Activated CD4-positive, alpha-beta T cell treated with anti-CD3 and anti-CD28 coated beads for 36 hours (primary cell): ENCODE measurements at regions of chrX and their contacts with region 1.

Region 1: GRCh38 chrX:149962859-149963757 is 24.8 kb upstream of the EOLA2 start:
- DNase-seq: peak; percentile 44
- ATAC-seq: peak; percentile 63
- H3K4me3 Mint-ChIP-seq: no peak overlapping the region
- H3K27ac Mint-ChIP-seq: no peak overlapping the region
- H3K4me1 Mint-ChIP-seq: peaks cover 4% of the 10 kb centered on the region
- H3K27me3 Mint-ChIP-seq: no peaks in the 10 kb centered on the region

Region 2: GRCh38 chrX:149346306-149346705 is 616.8 kb before region 1 on chrX:
- CTCF ChIA-PET with region 1: no interaction called
- POLR2A ChIA-PET with region 1: no interaction called
- intact Hi-C with region 1: no loop called
- DNase-seq: no peak
- ATAC-seq: no peak
- H3K4me3 Mint-ChIP-seq: no peak overlapping the region
- H3K27ac Mint-ChIP-seq: no peak overlapping the region
- H3K4me1 Mint-ChIP-seq: no peaks in the 10 kb centered on the region
- H3K27me3 Mint-ChIP-seq: no peaks in the 10 kb centered on the region

Region 3: DNA sequence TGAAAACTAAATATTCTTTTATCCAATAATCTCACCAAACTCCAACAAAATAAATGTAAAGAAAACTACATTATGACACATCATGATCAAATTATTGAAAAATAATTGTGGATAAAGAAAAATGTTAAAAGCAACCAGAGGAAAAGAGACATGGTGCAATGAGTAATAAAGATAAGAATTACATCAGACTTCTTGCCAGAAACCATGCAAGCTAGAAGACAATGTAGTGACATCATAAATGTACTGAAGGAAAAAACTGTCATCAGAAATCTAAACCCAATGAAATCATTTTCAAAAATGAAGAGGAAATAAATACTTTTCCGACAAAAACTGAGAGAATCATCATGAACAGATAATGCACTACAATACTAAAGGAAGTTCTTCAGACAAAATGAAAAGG is 111.1 kb after region 1 on chrX:
- CTCF ChIA-PET with region 1: no interaction called
- POLR2A ChIA-PET with region 1: no interaction called
- intact Hi-C with region 1: no loop called
- DNase-seq: no peak
- ATAC-seq: no peak
- H3K4me3 Mint-ChIP-seq: no peak overlapping the region
- H3K27ac Mint-ChIP-seq: no peak overlapping the region
- H3K4me1 Mint-ChIP-seq: no peaks in the 10 kb centered on the region
- H3K27me3 Mint-ChIP-seq: no peaks in the 10 kb centered on the region

Region 4: DNA sequence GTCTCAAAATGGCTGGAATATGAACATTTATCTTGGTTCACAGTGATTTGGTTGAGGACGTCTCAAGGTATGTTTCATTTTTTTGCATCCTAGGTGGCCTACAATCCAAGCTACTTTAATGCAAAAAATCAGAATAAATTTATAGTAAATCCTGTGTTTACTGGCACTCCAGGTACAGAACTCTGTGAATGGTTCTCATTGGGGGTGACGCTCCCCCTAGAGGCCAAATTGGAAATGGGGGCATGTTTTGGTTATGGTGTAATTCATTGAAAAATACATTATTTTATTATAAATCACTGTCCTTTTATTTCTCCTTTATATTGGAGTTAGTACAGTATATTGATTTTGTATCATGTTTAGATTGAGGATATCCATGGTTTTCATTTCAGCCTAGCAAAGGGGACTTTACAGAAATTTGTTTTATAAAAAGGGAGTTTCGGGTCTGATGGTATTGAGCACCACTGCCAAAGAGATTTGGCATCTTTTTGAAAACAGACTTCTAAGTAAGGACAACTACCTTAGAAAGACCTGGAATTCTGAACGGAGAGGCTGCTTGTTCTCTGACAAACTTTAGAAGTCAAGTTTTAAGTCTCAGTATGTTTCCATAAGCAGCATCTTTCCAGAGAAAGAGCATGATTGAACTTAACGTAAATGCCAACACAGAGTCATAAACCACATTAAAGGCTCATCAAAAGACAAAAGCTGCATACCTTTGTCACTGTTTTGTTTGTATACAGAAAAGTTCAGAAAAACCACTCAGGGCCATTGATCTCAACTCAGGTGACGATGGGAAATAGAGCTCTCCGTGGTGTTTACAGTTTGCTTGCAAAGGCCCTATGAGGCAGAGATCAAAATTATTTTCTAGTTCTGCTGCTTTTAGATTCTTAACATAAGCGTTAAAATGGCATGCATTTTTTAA is 624.7 kb after region 1 on chrX:
- CTCF ChIA-PET with region 1: no interaction called
- POLR2A ChIA-PET with region 1: no interaction called
- intact Hi-C with region 1: loop called in 1 of 2 experiments (anchors 5 kb)
- DNase-seq: peak; percentile 55
- ATAC-seq: no peak
- H3K4me3 Mint-ChIP-seq: no peak overlapping the region
- H3K27ac Mint-ChIP-seq: no peak overlapping the region
- H3K4me1 Mint-ChIP-seq: peaks cover 28% of the 10 kb centered on the region
- H3K27me3 Mint-ChIP-seq: no peaks in the 10 kb centered on the region

Region 5: DNA sequence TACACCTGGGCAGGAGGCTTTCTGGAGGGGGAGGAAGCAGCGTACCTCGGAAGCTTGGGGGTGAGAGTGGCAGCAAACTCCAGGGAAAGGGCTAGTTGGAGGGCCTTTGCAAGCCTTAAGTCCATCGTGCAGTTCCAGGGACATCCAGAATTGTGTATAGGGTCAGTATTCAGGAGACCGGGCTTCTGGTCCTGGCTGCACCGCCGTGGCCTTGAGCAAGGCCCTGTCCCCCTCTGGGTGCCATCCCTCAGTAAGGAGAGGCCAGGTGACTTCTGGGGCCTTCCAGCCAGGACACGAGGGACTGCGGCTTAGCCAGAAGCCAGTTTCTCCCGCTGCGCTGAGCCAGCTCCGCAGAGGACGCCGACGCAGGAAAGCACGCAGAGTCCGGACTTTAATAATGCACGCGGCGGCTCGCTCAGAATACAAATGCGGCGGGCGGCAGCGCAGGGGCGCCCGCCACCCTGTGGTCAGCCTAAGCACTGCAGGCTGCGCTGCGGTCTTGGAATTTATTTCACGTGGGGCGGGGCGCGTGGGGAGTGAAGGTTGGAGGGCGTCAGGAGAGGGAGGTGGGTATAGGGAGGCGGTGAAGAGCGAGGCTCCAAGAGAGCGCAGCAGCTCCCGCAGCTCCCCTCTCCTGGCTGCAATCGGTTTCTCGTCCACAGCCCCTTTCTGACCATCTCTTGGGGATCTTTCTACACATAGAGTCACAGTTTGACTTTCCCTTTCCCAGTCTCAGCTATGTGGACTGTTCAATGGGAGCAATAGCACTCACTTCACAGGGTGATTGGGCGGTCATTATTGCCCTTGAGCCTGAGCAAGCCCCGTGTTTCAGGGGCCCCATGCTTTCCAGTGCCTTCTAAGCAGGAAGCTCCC is 1119.2 kb after region 1 on chrX:
- CTCF ChIA-PET with region 1: no interaction called
- POLR2A ChIA-PET with region 1: no interaction called
- intact Hi-C with region 1: no loop called
- DNase-seq: peak; percentile 74
- ATAC-seq: peak; percentile 76
- H3K4me3 Mint-ChIP-seq: no peak overlapping the region
- H3K27ac Mint-ChIP-seq: no peak overlapping the region
- H3K4me1 Mint-ChIP-seq: no peaks in the 10 kb centered on the region
- H3K27me3 Mint-ChIP-seq: peaks cover 19% of the 10 kb centered on the region